ENCODE measurements at regions of chr19 and their contacts with region 1.

Region 1: DNA sequence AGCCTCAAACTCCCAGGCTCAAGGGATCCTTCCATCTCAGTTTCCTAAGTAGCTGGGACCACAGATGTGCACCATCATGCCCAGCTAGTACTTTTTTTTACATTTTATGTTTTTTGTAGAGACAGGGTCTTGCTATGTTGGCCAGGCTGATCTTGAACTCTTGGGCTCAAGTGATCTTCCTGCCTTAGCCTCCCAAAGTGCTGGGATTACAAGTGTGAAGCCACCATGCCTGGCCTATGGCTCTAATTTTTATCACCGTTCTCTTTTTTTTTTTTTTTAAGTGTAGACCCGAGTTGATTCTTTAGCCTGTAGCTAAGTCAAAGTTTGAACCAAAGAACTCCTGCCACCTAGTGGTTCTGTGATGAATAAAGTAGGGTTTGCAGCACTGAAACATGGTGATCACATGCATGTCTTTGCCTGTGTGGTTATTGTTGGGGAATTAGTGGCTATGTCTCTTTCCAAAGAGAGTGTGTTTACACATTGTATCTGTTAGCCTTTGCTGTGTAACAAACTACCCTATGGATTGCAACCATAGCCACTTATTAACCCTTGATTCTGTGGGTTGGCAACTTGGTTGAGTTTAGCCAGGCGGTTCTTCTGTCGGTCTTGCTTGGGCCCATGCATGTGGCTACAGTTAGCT is 11.6 kb downstream of the NFILZ start:
- DNase-seq: peak in 3 of 9 experiments; percentile 23 to 76 (median 67)
- ATAC-seq: peak; percentile 74
- H3K4me3 ChIP-seq: no peak overlapping the region
- H3K4me3 Mint-ChIP-seq: no peak overlapping the region
- H3K27ac ChIP-seq: no peak overlapping the region
- H3K27ac Mint-ChIP-seq: no peak overlapping the region
- H3K4me1 ChIP-seq: peaks cover 7% of the 10 kb centered on the region
- H3K4me1 Mint-ChIP-seq: peaks cover 11% of the 10 kb centered on the region
- H3K27me3 ChIP-seq: peaks cover 0 to 4% of the 10 kb centered on the region in 2 experiments
- H3K27me3 Mint-ChIP-seq: peaks cover 26% of the 10 kb centered on the region
- CTCF ChIP-seq: peak; percentile 63

Region 2: DNA sequence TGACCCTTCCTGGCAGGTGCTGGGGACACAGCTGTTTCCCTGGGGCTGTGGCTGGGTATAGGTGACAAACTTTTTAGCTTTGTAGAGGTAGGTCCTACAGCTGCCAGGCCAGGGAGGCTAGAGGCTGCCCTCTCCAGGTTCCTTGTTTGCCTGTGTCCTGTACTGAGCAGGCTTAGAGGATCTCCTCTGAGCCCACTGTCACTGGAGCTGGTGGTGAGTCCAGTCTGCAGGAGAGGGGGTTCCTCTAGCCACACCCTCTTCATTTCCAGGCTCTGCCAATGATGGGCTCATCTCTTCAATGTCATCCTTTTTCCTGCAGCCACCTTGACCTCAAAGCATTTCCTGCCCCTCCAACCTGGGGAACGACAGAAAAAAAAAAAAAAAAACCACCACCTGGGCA is 264.4 kb before region 1 on chr19:
- CTCF ChIA-PET with region 1: no interaction called
- POLR2A ChIA-PET with region 1: no interaction called
- intact Hi-C with region 1: no loop called
- DNase-seq: no peak
- ATAC-seq: no peak
- H3K4me3 ChIP-seq: no peak overlapping the region
- H3K4me3 Mint-ChIP-seq: no peak overlapping the region
- H3K27ac ChIP-seq: no peak overlapping the region
- H3K27ac Mint-ChIP-seq: no peak overlapping the region
- H3K4me1 ChIP-seq: peaks cover 6% of the 10 kb centered on the region
- H3K4me1 Mint-ChIP-seq: peaks cover 3% of the 10 kb centered on the region
- H3K27me3 ChIP-seq: no peaks in the 10 kb centered on the region
- H3K27me3 Mint-ChIP-seq: no peaks in the 10 kb centered on the region
- CTCF ChIP-seq: no peak

Region 3: GRCh38 chr19:8615813-8616596 is 26.0 kb before region 1 on chr19:
- CTCF ChIA-PET with region 1: interaction called, 13 read pairs
- POLR2A ChIA-PET with region 1: no interaction called
- intact Hi-C with region 1: no loop called
- DNase-seq: peak in 7 of 9 experiments; percentile 38 to 77 (median 69)
- ATAC-seq: peak; percentile 50
- H3K4me3 ChIP-seq: no peak overlapping the region
- H3K4me3 Mint-ChIP-seq: no peak overlapping the region
- H3K27ac ChIP-seq: no peak overlapping the region
- H3K27ac Mint-ChIP-seq: no peak overlapping the region
- H3K4me1 ChIP-seq: peaks cover 29% of the 10 kb centered on the region
- H3K4me1 Mint-ChIP-seq: peaks cover 24% of the 10 kb centered on the region
- H3K27me3 ChIP-seq: no peaks in the 10 kb centered on the region
- H3K27me3 Mint-ChIP-seq: no peaks in the 10 kb centered on the region
- CTCF ChIP-seq: peak; percentile 92

Region 4: DNA sequence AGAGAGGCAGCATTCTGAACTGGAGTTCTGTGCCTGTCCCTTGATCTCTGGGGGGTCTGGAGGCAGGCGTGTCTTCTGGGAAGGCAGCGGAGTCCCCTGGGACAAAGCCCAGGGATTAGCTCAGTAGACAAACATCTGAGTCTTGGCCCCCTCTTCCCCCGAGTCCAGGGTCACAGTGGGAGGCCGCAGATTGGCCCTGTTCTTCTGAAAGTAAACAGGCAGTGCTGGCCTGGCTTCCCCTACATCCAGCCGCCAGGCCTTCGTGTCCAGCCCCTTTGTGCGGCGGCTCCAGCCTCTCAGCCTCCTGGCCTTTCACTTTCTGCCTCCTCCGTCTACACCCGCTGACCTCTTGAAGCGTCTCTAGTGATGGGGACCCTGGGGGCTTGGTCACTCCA is 10.6 kb before region 1 on chr19:
- CTCF ChIA-PET with region 1: interaction called, 12 read pairs
- POLR2A ChIA-PET with region 1: no interaction called
- intact Hi-C with region 1: no loop called
- DNase-seq: no peak
- ATAC-seq: no peak
- H3K4me3 ChIP-seq: no peak overlapping the region
- H3K4me3 Mint-ChIP-seq: no peak overlapping the region
- H3K27ac ChIP-seq: no peak overlapping the region
- H3K27ac Mint-ChIP-seq: no peak overlapping the region
- H3K4me1 ChIP-seq: no peaks in the 10 kb centered on the region
- H3K4me1 Mint-ChIP-seq: no peaks in the 10 kb centered on the region
- H3K27me3 ChIP-seq: no peaks in the 10 kb centered on the region
- H3K27me3 Mint-ChIP-seq: no peaks in the 10 kb centered on the region
- CTCF ChIP-seq: no peak

Region 5: DNA sequence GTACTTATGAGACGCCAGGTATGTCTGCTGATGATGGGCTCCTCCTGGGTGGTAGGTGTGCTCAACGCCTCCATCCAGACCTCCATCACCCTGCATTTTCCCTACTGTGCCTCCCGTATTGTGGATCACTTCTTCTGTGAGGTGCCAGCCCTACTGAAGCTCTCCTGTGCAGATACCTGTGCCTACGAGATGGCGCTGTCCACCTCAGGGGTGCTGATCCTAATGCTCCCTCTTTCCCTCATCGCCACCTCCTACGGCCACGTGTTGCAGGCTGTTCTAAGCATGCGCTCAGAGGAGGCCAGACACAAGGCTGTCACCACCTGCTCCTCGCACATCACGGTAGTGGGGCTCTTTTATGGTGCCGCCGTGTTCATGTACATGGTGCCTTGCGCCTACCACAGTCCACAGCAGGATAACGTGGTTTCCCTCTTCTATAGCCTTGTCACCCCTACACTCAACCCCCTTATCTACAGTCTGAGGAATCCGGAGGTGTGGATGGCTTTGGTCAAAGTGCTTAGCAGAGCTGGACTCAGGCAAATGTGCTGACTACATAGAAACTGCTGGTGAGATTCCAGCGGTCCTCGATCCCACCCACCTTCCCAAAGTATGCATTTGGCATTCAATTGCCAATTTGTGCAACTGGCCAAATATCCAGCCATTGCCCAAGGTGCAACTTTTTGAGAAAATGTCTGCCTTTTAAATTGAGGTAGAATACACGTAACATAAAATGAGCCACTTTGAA is 89.6 kb after region 1 on chr19:
- CTCF ChIA-PET with region 1: no interaction called
- POLR2A ChIA-PET with region 1: no interaction called
- intact Hi-C with region 1: no loop called
- DNase-seq: no peak
- ATAC-seq: no peak
- H3K4me3 ChIP-seq: no peak overlapping the region
- H3K4me3 Mint-ChIP-seq: no peak overlapping the region
- H3K27ac ChIP-seq: no peak overlapping the region
- H3K27ac Mint-ChIP-seq: no peak overlapping the region
- H3K4me1 ChIP-seq: no peaks in the 10 kb centered on the region
- H3K4me1 Mint-ChIP-seq: no peaks in the 10 kb centered on the region
- H3K27me3 ChIP-seq: no peaks in the 10 kb centered on the region
- H3K27me3 Mint-ChIP-seq: peaks cover 13% of the 10 kb centered on the region
- CTCF ChIP-seq: no peak

Measured in CD8-positive, alpha-beta T cell (primary cell).